Endothelial cell of umbilical vein (primary cell): ENCODE measurements at regions of chr10 and their contacts with region 1.

Region 1: GRCh38 chr10:46216836-46217751 is 69.7 kb upstream of the ANTXRL start:
- DNase-seq: no peak
- H3K4me3 ChIP-seq: no peak overlapping the region
- H3K27ac ChIP-seq: no peak overlapping the region
- H3K4me1 ChIP-seq: no peaks in the 10 kb centered on the region
- H3K27me3 ChIP-seq: no peaks in the 10 kb centered on the region
- CTCF ChIP-seq: no peak
- POLR2A ChIP-seq: no peak

Region 2: DNA sequence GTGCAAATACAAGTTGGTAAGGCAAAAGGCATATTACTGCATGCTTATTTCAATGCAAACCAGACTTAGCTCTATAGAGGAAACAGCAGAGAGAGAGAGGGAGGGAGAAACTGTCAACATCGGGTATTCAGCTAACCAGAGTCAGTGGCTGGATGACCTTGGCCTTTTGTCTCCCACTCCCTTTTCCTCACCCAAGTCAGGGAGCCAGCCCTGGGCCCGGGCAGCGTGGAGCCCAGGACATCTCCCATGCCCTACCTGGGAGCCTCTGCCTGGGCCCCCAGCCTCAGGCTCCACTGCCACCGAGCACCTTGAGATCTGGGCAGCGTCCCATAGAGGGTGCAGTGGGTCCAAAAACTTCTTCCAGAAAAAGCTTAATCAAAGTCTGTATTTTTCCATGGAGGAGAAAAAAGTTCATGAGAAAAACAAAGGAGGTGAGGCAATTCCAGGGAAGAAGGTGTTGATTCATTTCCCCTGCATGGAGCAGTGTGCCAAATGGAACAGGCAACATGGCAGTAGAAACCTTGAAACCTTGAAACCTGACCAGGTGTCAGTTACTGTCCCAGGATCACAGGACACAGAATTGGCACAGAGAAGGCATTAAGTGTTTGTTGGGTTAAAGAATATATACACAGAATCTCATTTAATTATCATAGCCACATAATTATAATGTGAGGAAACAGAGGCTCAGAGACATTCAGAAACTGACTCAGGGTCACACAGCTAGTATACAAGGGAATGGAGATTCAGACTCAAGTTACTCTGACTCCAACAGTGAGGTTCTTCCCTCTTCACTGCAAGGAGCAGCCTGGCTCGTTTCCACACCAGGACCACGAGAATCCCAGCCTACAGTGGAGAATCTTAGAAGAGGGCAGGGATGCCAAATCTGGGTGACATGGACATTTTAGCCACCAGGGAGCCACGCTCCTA is 180.9 kb before region 1 on chr10:
- CTCF ChIA-PET with region 1: no interaction called
- POLR2A ChIA-PET with region 1: no interaction called
- dilution Hi-C with region 1: no loop called
- intact Hi-C with region 1: loop called (anchors 1 kb)
- DNase-seq: peak; percentile 60
- H3K4me3 ChIP-seq: no peak overlapping the region
- H3K27ac ChIP-seq: peak overlapping the region; percentile 2
- H3K4me1 ChIP-seq: peaks cover 24% of the 10 kb centered on the region
- H3K27me3 ChIP-seq: peaks cover 0 to 2% of the 10 kb centered on the region in 2 experiments
- CTCF ChIP-seq: peak in 1 of 2 donors; percentile 9
- POLR2A ChIP-seq: no peak